K562 (cell line): ENCODE measurements at regions of chr7 and their contacts with region 1.

Region 1: GRCh38 chr7:100965723-100966541 is 3.4 kb upstream of the MUC12 start:
- DNase-seq: peak; percentile 95 to 99 (median 98)
- ATAC-seq: peak; percentile 97
- H3K4me3 ChIP-seq: peak overlapping the region; percentile 43
- H3K27ac ChIP-seq: no peak overlapping the region
- H3K4me1 ChIP-seq: peaks cover 12 to 25% of the 10 kb centered on the region in 2 experiments; a peak in 4 of 5 replicates
- H3K27me3 ChIP-seq: peaks cover 44 to 72% of the 10 kb centered on the region in 2 experiments
- CTCF ChIP-seq: peak; percentile 91 to 98 (median 97)
- EP300 ChIP-seq: peak; percentile 27; the same call in 1 of the 2 replicates
- POLR2A ChIP-seq: no peak
- RAD21 ChIP-seq: peak; percentile 61 to 88

Region 2: DNA sequence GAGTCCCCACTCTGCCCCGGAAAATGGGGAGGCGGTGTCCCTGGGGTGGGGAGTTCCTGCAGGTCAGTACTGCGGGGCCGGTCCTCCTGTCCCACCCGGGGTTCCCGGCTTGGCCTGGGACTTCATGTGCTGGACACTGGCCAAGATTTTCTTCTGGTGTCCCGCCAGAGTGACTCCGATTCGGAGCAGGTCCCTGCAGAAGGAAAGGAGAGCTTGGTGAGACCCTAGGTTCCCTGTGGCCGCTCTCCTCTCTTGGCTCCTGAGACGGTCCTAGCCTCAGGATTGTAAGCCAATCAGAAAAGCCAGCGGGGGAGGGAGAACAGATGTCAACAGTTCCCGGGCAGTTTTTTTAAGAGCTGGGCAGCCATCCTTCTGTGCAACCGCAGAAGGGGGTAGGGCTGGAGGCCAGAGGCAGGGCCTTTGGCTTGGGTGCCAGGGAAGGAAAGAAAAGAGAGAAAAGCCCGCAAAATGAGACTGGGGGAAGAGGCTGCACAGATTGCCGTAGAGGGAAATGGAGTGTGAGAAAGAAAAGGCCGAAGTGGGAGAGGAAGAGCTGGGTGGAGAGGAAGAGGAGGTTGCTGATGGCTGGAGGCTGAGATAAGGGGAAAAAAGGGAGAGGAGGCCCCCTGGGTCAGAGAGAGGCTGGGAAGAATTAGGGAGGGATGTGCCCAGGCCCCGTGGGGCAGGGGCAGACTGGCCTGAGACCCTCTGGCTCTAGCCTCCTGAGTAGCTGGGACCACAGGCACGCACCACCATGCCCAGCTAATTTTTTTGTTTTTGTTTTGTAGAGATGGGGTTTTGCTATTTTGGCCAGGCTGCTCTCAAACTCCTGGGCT is 162.3 kb before region 1 on chr7:
- CTCF ChIA-PET with region 1: no interaction called
- POLR2A ChIA-PET with region 1: no interaction called
- in situ Hi-C with region 1: no loop called
- intact Hi-C with region 1: loop called (anchors 5 kb)
- DNase-seq: peak; percentile 80 to 86 (median 84)
- ATAC-seq: peak; percentile 68
- H3K4me3 ChIP-seq: no peak overlapping the region
- H3K27ac ChIP-seq: peak overlapping the region; percentile 39; the same call in 1 of the 3 replicates
- H3K4me1 ChIP-seq: peaks cover 46 to 66% of the 10 kb centered on the region in 2 experiments
- H3K27me3 ChIP-seq: no peaks in the 10 kb centered on the region
- CTCF ChIP-seq: no peak
- EP300 ChIP-seq: peak; percentile 16; the same call in 1 of the 2 replicates
- POLR2A ChIP-seq: 0 out of 2 replicates have a peak, but pooled peaks have one; percentile 27
- RAD21 ChIP-seq: no peak

Region 3: DNA sequence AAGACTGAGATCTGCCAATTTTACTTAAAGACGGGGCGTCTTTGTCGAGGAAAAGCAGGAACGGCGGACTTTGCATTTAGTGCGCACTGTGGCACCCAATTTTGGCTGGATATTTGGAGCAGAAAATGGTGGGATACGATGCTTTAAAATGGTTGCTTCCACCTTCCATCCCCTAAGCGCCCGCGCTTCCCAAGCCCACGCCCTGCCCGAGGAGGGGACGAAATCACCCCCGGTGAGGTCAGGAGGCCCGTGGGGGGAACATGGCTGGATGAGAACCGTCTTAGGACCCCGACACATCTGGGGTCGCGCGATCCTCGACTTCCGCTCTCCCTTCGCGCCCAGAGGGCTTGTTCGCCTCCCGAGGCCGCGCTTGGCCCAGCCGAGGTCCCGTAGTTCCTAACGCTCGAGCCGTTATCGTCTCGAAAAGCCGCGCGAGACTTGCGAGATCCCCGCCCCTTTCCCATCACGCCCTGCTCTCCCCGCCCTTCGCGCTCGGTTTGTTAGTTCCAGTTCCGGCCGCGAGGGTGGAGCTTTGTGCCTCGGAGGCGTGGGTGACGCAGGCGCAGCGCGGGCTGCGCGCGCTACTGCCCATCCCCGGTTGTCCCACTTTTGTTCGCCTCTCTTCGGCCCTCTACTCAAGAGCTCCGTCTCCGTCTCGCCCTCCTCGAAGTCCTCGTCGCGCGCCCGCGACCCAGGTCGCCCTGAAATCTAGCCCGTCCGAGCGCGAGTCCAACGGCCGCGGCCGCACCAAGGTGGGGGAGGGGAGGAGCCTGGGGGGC is 91.2 kb before region 1 on chr7 and contains the start of gene SRRT:
- CTCF ChIA-PET with region 1: no interaction called
- POLR2A ChIA-PET with region 1: no interaction called
- in situ Hi-C with region 1: no loop called
- intact Hi-C with region 1: no loop called
- DNase-seq: peak; percentile 96 to 100 (median 98)
- ATAC-seq: peak; percentile 97
- H3K4me3 ChIP-seq: peak within 1 kb of the TSS; percentile 100
- H3K27ac ChIP-seq: peak within 1 kb of the TSS; percentile 96
- H3K4me1 ChIP-seq: peaks cover 20 to 48% of the 10 kb centered on the region in 2 experiments; a peak in 4 of 5 replicates
- H3K27me3 ChIP-seq: no peaks in the 10 kb centered on the region
- CTCF ChIP-seq: peak; percentile 37 to 41 (median 41); a peak in 4 of 6 replicates
- EP300 ChIP-seq: peak; percentile 56
- POLR2A ChIP-seq: peak; percentile 98
- RAD21 ChIP-seq: 0 out of 4 replicates have a peak, but pooled peaks of 1 of the 2 experiments have one; percentile 3
- polyA plus RNA-seq, gene SRRT: 10.3 to 16.7 TPM

Region 4: GRCh38 chr7:100896732-100897608 is 69.0 kb before region 1 on chr7:
- CTCF ChIA-PET with region 1: no interaction called
- POLR2A ChIA-PET with region 1: no interaction called
- in situ Hi-C with region 1: no loop called
- intact Hi-C with region 1: loop called (anchors 1 kb)
- DNase-seq: peak; percentile 77 to 80 (median 78)
- ATAC-seq: peak; percentile 53
- H3K4me3 ChIP-seq: peak overlapping the region; percentile 39
- H3K27ac ChIP-seq: peak overlapping the region; percentile 48
- H3K4me1 ChIP-seq: peaks cover 27 to 71% of the 10 kb centered on the region in 2 experiments
- H3K27me3 ChIP-seq: no peaks in the 10 kb centered on the region
- CTCF ChIP-seq: peak; percentile 79 to 94 (median 84)
- EP300 ChIP-seq: no peak
- POLR2A ChIP-seq: no peak
- RAD21 ChIP-seq: peak; percentile 74 to 77

Region 5: DNA sequence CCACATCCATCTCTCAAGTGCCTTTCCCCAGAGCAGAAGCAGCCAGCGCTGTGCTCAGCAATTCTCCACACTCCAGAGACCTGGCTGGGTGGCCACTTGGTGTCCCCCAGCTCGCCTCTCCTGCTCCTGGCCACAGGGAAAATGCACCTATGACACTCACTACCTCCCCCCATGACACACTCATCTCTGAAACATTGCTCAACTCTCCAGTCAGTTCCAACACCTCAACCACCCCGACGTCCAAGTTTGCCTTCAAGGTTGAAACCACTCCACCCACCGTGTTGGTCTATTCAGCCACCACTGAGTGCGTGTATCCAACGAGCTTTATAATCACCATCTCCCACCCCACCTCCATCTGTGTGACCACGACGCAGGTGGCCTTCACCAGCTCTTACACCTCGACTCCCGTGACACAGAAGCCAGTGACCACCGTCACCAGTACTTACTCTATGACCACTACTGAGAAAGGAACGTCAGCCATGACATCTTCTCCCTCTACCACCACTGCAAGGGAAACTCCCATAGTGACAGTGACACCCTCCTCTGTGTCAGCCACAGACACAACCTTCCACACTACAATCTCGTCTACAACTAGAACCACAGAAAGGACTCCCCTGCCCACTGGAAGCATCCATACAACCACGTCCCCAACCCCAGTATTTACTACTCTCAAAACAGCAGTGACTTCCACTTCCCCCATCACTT is 13.9 kb before region 1 on chr7:
- CTCF ChIA-PET with region 1: no interaction called
- POLR2A ChIA-PET with region 1: interaction called, 8 read pairs
- in situ Hi-C with region 1: no loop called
- intact Hi-C with region 1: loop called (anchors 2 kb)
- DNase-seq: peak in 1 of 4 experiments; percentile 17
- ATAC-seq: peak; percentile 23
- H3K4me3 ChIP-seq: no peak overlapping the region
- H3K27ac ChIP-seq: no peak overlapping the region
- H3K4me1 ChIP-seq: peaks cover 0 to 10% of the 10 kb centered on the region in 2 experiments; a peak in 2 of 5 replicates
- H3K27me3 ChIP-seq: peaks cover 30 to 51% of the 10 kb centered on the region in 2 experiments
- CTCF ChIP-seq: no peak
- EP300 ChIP-seq: no peak
- POLR2A ChIP-seq: no peak
- RAD21 ChIP-seq: no peak

Region 6: GRCh38 chr7:101058355-101058754 is 92.4 kb after region 1 on chr7:
- CTCF ChIA-PET with region 1: interaction called, 13 read pairs
- POLR2A ChIA-PET with region 1: no interaction called
- in situ Hi-C with region 1: no loop called
- intact Hi-C with region 1: loop called (anchors 1 kb)
- DNase-seq: peak; percentile 80 to 86 (median 84)
- ATAC-seq: peak; percentile 92
- H3K4me3 ChIP-seq: no peak overlapping the region
- H3K27ac ChIP-seq: no peak overlapping the region
- H3K4me1 ChIP-seq: no peaks in the 10 kb centered on the region
- H3K27me3 ChIP-seq: peaks cover 5 to 30% of the 10 kb centered on the region in 2 experiments; a peak in 3 of 5 replicates
- CTCF ChIP-seq: no peak
- EP300 ChIP-seq: no peak
- POLR2A ChIP-seq: no peak
- RAD21 ChIP-seq: no peak

Region 7: DNA sequence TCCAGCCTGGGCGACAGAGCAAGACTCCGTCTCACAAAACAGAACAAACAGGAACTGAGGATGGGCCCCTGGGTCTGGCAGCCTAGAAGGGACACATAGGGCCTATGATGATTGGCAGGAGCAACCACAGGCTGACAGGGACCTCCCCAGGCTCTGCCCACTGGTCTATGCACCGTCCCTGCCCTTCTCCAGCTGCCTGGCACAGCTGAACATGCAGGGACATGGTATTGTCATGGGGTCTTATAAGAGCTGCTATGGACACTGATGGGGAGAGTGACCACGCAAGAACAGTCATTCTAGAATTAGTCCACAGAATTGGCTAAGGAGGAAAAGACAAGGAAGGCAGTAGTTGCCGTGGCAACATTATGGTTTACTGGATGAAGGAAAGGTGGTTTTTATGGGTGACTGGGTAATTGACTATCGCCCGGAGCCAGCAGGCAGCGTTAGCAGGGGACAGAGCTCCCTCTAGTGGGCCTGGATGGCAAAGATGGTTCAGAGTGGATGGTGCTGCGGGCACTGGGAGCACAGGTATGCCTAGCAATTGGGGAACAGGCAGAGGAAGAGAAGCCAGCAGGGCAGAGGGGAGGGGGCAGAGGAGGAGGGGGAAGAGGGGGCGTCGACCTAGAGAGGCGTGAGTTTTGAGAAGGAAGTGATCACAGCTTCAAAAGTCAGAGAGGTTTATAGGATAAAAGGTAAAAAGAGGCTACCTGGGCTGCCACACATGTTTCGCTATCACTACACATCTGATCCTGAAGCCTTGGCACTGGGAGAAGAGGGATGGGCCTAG is 111.6 kb after region 1 on chr7:
- CTCF ChIA-PET with region 1: interaction called, 9 read pairs
- POLR2A ChIA-PET with region 1: no interaction called
- in situ Hi-C with region 1: no loop called
- intact Hi-C with region 1: loop called (anchors 1 kb)
- DNase-seq: peak; percentile 84 to 88 (median 85)
- ATAC-seq: peak; percentile 98
- H3K4me3 ChIP-seq: no peak overlapping the region
- H3K27ac ChIP-seq: no peak overlapping the region
- H3K4me1 ChIP-seq: peaks cover 0 to 4% of the 10 kb centered on the region in 2 experiments; a peak in 2 of 5 replicates
- H3K27me3 ChIP-seq: peaks cover 3 to 15% of the 10 kb centered on the region in 2 experiments; a peak in 3 of 5 replicates
- CTCF ChIP-seq: peak; percentile 95 to 98 (median 97)
- EP300 ChIP-seq: no peak
- POLR2A ChIP-seq: no peak
- RAD21 ChIP-seq: peak; percentile 75 to 90

Region 8: DNA sequence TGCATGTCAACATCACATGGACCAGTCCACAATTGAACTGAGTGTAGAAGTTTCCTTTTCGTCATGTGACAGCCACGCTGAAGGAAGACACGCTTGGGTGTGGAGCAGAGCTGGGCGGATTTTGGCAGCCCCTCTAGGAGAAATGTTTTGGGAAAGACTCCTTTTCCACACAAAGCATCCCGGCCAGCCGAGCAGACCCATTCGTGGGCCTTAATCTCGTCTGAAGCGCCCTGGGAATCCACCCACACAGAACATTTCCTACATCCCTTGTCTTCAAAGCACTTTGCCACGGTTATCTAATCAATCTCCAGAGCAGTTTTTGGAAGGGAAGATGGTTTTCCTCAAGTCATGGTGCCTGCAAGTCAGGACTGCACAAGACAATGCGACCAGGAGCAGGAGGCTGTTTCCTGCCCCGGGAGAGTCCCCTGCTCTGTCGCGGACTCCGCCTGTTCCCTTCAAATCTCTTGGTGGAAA is 364.1 kb after region 1 on chr7:
- CTCF ChIA-PET with region 1: no interaction called
- POLR2A ChIA-PET with region 1: no interaction called
- in situ Hi-C with region 1: no loop called
- intact Hi-C with region 1: no loop called
- DNase-seq: no peak
- ATAC-seq: no peak; the same call in 2 of the 3 replicates
- H3K4me3 ChIP-seq: no peak overlapping the region
- H3K27ac ChIP-seq: no peak overlapping the region
- H3K4me1 ChIP-seq: no peaks in the 10 kb centered on the region
- H3K27me3 ChIP-seq: peaks cover 24 to 46% of the 10 kb centered on the region in 2 experiments
- CTCF ChIP-seq: no peak
- EP300 ChIP-seq: no peak
- POLR2A ChIP-seq: no peak
- RAD21 ChIP-seq: no peak